ENCODE measurements at regions of chr15 and their contacts with region 1.

Region 1: GRCh38 chr15:27902680-27903385 is 196.3 kb downstream of the OCA2 start:
- DNase-seq: no peak
- H3K4me3 ChIP-seq: no peak overlapping the region
- H3K27ac ChIP-seq: no peak overlapping the region
- H3K4me1 ChIP-seq: no peaks in the 10 kb centered on the region
- H3K27me3 ChIP-seq: peaks cover 23% of the 10 kb centered on the region
- CTCF ChIP-seq: no peak

Region 2: DNA sequence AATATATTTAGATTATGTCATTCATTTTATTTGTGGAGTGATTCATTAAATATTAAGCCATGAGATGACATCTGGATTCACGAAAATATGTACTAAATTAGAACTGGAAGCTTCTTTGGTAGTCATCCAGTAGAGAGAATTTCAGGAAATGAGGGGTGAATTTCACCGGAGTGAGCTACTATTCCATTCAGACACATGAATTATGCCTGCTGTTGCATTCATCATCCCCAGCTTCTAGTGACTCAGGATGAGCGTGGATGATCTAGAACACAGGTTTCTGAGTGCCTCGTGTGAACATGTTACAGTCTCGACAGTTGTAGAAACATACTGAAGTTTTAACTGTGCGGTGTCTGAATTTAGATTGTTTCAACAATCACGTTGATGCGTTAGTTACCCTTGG is 974.8 kb before region 1 on chr15:
- CTCF ChIA-PET with region 1: no interaction called
- POLR2A ChIA-PET with region 1: interaction called, 10 read pairs
- intact Hi-C with region 1: no loop called
- DNase-seq: no peak
- H3K4me3 ChIP-seq: no peak overlapping the region
- H3K27ac ChIP-seq: no peak overlapping the region
- H3K4me1 ChIP-seq: no peaks in the 10 kb centered on the region
- H3K27me3 ChIP-seq: no peaks in the 10 kb centered on the region
- CTCF ChIP-seq: no peak

Region 3: GRCh38 chr15:27977696-27978095 is 74.9 kb after region 1 on chr15:
- CTCF ChIA-PET with region 1: no interaction called
- POLR2A ChIA-PET with region 1: no interaction called
- intact Hi-C with region 1: no loop called
- DNase-seq: no peak
- H3K4me3 ChIP-seq: no peak overlapping the region
- H3K27ac ChIP-seq: no peak overlapping the region
- H3K4me1 ChIP-seq: no peaks in the 10 kb centered on the region
- H3K27me3 ChIP-seq: peaks cover 8% of the 10 kb centered on the region; the same call in 1 of the 2 replicates
- CTCF ChIP-seq: no peak